ENCODE measurements at regions of chr14 and their contacts with region 1.

Region 1: DNA sequence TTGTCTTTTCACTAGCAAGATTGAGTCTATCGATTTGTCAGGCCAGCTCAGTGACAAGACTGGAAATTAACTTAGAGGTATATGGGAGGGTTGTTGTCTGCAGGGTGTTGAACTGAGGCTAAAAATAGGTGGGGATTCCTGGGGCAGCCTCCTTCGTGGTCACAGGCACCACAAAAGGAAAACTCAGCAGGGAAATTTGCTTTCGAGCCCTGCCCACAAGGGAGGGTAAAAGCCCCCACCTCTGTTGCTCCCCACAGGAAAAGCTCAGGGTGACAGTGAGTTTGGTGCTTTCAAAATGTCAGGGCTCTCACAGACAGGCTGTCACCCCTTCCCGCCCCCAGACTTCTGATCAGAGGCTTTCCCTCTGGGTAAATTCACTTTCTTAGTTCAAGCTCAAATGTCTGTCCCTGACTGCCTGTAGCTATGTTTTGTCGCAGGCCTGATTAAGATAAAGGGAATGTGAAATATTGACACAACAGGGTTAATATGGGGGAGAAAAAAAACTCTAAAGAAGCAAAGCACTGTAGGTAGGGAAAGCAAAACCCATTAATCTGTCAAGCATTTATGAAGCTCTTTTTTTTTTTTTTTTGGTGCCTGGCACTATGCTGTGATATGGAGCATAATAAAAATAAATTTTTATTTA is 11.7 kb upstream of the NFKBIA start:
- DNase-seq: no peak

Region 2: DNA sequence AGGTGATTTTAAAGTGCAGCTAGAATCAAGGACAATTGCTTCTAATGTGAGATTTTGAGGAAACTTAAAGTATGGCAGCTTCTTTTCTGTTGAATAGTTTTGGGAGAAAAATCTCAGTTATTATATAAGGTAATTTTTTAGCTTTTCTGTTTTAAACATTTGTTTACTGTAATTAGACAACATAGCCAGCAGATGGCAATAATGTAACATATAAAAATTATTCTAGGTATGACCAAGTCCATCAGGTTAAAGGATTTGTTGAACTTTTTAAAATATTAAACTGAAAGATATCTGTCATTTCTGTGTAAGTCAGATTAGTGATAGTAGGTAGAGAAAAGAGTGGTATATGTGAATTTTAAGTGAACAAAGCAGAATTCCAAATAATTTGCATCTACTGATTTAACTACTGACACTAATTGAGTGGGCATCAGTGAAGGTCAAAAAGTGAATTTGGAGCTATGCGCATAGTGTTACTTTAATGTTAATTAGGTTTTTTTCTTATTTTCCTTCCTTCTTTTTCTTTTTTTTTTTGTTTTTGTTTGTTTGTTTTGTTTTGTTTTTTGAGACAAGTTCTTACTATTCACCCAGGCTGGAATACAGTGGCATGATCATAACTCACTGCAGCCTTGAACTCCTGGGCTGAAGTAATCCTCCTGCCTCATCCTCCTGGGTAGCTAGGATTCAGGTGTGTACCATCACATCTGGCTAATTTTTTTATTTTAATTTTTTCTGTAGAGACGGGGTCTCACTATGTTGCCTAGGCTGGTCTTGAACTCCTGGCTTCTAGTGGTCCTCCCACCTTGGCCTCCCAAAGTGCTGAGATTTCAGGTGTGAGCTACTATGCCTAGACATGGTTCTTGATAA is 275.3 kb before region 1 on chr14:
- in situ Hi-C with region 1: loop called (anchors 10 kb)
- DNase-seq: peak; percentile 48

Measured in KBM-7 (cell line).